Cardiac septum (tissue), 1 donor: ENCODE measurements at regions of chr7 and their contacts with region 1.

Region 1: GRCh38 chr7:107462740-107463444 is 7.0 kb upstream of the GPR22 start:
- DNase-seq: peak; percentile 78

Region 2: GRCh38 chr7:107201795-107202450 is 261.0 kb before region 1 on chr7:
- intact Hi-C with region 1: loop called (anchors 5 kb)
- DNase-seq: peak; percentile 81

Region 3: DNA sequence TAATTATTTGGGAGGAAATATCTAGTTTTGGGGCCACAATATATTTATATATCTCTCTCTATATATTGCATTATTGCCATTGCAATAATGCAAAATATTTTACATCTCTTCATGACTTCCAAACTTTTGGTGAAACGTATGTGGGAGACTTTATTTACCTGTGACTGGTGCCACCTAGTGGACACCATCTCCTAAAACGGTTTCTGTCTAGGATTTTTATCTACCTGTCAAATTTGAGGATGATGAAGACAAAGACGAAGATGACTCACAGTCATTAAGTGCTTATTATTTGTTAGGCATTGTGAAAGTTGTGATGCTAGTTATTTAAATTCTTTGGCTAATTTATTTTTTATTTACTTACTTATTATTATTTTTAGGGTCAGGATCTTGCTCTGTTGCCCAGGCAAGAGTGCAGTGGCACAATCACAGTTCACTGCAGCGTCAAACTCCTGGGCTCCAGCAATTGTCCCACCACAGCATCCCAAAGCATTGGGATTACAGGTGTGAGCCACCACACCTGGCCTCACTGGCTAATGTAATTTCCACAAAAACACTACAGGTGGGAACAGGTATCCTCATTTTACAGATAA is 262.4 kb after region 1 on chr7:
- intact Hi-C with region 1: loop called (anchors 2 kb)
- DNase-seq: no peak

Region 4: GRCh38 chr7:107879400-107880035 is 416.6 kb after region 1 on chr7:
- intact Hi-C with region 1: loop called (anchors 5 kb)
- DNase-seq: no peak